Activated CD4-positive, alpha-beta T cell treated with anti-CD3 and anti-CD28 coated beads, Interleukin-2, amount 10 ng/mL, durations not matched to agents 24 days and 14 days (primary cell): ENCODE measurements at regions of chr20 and their contacts with region 1.

Region 1: DNA sequence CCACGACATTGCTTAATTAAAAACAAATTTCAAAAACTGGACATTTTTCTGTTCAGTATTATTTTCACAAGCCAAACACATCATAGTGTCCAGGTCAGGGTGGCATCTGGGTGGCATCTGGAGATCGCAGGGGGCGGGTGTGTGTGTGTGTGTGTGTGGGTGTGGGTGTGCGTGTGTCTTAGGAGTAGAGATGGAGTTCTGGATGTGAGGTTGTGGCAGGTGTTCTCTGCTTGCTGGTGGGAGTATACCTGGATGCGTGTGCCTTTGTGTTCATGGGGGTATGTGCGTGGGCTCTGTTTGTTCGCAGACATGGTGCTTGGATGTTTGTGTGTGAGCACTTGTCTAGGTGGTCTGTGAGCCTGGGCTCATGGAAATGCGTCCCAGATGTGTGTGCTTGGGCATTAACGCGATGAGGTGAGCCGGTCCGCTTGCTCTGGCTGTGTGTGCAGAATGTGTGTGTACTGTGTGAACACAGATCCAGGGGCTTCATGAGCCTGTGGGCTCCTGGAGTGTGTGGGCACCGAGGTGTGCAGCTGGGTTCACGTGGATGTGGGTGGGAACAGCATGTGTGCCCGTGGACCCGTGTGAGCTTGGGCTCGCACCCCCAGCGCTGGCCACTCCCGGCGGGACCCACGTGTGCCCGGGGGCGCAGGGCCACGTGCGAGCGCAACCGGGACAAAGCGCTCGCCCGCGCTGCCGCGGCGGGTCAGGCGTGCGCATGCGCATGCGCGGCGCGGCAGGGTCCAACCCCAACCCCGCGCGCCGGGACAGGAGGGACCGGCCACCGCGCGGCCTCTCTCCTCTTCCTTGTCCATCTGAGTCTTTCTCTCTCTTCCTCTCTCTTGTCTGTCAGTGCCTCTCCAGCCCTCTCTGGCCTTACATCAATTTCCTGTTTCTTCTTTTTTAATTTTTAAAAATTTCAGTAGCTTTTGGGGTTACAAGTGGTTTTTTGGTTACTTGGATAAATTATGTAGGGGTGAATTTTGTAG is 60.4 kb downstream of the SRC start:
- DNase-seq: peak; percentile 80
- H3K4me3 Mint-ChIP-seq: peak overlapping the region; percentile 39
- H3K27ac Mint-ChIP-seq: peak overlapping the region; percentile 40
- H3K4me1 Mint-ChIP-seq: peaks cover 11% of the 10 kb centered on the region
- H3K27me3 Mint-ChIP-seq: peaks cover 22% of the 10 kb centered on the region

Region 2: GRCh38 chr20:37294262-37294981 is 111.9 kb before region 1 on chr20:
- intact Hi-C with region 1: no loop called
- DNase-seq: no peak
- H3K4me3 Mint-ChIP-seq: no peak overlapping the region
- H3K27ac Mint-ChIP-seq: no peak overlapping the region
- H3K4me1 Mint-ChIP-seq: peaks cover 40% of the 10 kb centered on the region
- H3K27me3 Mint-ChIP-seq: no peaks in the 10 kb centered on the region

Region 3: GRCh38 chr20:37430788-37431460 is 24.6 kb after region 1 on chr20:
- intact Hi-C with region 1: no loop called
- DNase-seq: no peak
- H3K4me3 Mint-ChIP-seq: no peak overlapping the region
- H3K27ac Mint-ChIP-seq: no peak overlapping the region
- H3K4me1 Mint-ChIP-seq: no peaks in the 10 kb centered on the region
- H3K27me3 Mint-ChIP-seq: no peaks in the 10 kb centered on the region

Region 4: DNA sequence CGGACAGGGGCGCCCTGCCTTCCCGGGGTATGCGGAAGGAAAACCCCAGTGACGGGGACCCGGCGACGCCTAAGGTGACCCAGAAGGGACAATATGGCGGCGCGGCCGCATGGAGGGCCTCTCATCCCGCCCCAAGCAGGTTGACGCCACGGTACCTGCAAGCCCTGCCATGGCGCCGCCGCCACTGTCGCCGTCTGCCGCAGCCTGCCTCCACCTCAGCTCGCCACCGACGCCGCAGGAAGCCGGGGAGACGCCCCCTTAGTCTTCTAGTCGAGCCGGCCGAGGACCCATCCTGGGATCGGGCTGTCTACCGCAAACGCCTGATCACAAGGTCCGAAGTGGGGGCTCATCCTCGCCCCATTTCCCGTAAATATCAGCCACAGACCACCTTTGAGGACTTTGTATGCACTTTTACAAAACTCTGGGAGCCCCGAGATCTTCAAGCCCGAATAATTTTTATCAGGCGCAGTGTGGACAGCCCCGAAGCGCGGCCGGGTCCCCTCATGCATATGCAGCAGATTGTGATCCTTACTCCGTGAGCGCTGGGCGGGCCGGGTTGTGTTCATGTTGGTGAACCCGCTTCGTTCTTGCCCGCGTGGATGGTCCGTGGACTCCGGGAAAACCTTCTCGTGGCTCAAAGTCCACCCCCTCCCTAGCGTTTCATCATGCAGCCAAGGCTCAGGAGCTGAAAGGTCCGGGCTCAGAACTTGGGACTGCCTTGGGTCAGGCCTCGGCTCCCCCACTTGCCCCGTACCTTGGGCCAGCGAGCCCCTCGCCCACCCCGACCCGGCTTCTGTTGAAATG is 121.5 kb after region 1 on chr20 and contains the start of gene BLCAP:
- intact Hi-C with region 1: loop called (anchors 2 kb)
- DNase-seq: peak; percentile 98
- H3K4me3 Mint-ChIP-seq: peak within 1 kb of the TSS; percentile 92
- H3K27ac Mint-ChIP-seq: peak within 1 kb of the TSS; percentile 100
- H3K4me1 Mint-ChIP-seq: peaks cover 42% of the 10 kb centered on the region
- H3K27me3 Mint-ChIP-seq: peaks cover 5% of the 10 kb centered on the region
- total RNA-seq, gene BLCAP: 31.7 and 31.9 TPM in 2 replicates